ENCODE measurements at regions of chr11 and their contacts with region 1.

Region 1: DNA sequence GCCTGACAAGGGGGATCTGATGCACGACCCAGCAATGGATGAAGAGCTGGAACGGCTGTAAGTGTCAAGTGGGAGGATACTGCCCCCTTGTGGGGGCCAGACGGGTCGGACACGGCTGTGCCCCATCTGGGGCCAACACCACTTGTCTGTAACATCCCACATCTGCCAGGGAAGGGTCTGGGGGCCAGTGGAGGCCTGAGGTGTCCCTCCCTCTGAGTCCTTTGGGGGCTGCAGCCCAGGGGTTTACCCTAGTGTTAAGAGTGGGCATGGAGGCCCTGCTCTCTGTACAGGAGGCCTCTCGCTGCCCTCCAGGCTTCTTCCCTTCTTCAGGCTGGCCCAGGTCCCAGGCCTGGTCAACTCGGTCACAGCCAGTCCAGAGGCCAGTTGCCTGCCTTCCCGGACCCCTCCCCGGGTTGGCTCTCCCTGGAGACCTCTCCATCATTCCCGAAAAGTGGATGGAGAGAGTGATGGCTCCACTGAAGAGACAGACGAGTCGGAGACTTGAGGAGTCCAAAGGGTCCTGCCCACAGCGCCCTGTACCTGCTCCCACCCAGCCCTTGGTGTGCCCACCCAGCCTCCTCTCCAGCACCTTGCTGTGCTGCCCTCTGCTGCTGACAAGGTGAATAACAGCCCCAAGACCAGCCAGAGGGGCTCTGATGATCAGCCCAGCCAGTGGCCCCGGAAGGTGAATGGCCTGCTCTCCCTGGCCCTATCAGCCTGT is 15.4 kb downstream of the ARFGAP2 start:
- DNase-seq: peak; percentile 47
- ATAC-seq: peak; percentile 84
- H3K4me3 Mint-ChIP-seq: no peak overlapping the region
- H3K27ac Mint-ChIP-seq: no peak overlapping the region
- H3K4me1 Mint-ChIP-seq: no peaks in the 10 kb centered on the region
- H3K27me3 Mint-ChIP-seq: no peaks in the 10 kb centered on the region
- CTCF ChIP-seq: peak; percentile 46

Region 2: DNA sequence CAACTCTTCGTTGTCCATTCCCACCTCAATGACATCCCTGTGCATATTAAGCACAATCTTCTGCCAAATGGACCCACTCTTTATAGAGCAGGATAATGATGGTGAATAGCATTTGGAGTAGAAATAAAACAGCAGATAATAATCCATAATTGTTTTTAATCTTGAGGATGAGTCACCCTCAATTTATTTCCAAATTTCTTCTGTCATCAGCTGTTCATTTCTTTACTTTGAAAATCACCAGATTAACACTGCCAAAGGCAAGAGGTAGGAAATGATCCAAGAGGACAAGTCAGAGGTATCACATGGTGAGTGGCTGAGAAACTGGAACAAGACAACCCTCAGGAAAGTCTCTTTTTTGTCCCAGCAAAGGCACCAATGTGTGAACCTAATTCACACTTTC is 560.2 kb before region 1 on chr11:
- CTCF ChIA-PET with region 1: no interaction called
- POLR2A ChIA-PET with region 1: no interaction called
- intact Hi-C with region 1: no loop called
- DNase-seq: no peak
- ATAC-seq: no peak
- H3K4me3 Mint-ChIP-seq: no peak overlapping the region
- H3K27ac Mint-ChIP-seq: no peak overlapping the region
- H3K4me1 Mint-ChIP-seq: peaks cover 11% of the 10 kb centered on the region
- H3K27me3 Mint-ChIP-seq: no peaks in the 10 kb centered on the region
- CTCF ChIP-seq: no peak

Region 3: GRCh38 chr11:47233989-47234668 is 72.8 kb after region 1 on chr11:
- CTCF ChIA-PET with region 1: no interaction called
- POLR2A ChIA-PET with region 1: no interaction called
- intact Hi-C with region 1: no loop called
- DNase-seq: no peak
- ATAC-seq: no peak
- H3K4me3 Mint-ChIP-seq: no peak overlapping the region
- H3K27ac Mint-ChIP-seq: no peak overlapping the region
- H3K4me1 Mint-ChIP-seq: peaks cover 2% of the 10 kb centered on the region
- H3K27me3 Mint-ChIP-seq: no peaks in the 10 kb centered on the region
- CTCF ChIP-seq: no peak

Region 4: GRCh38 chr11:47259178-47259977 is 98.1 kb after region 1 on chr11:
- CTCF ChIA-PET with region 1: interaction called, 10 read pairs
- POLR2A ChIA-PET with region 1: interaction called, 5 read pairs
- intact Hi-C with region 1: no loop called
- DNase-seq: no peak
- ATAC-seq: peak; percentile 87
- H3K4me3 Mint-ChIP-seq: no peak overlapping the region
- H3K27ac Mint-ChIP-seq: no peak overlapping the region
- H3K4me1 Mint-ChIP-seq: peaks cover 2% of the 10 kb centered on the region
- H3K27me3 Mint-ChIP-seq: no peaks in the 10 kb centered on the region
- CTCF ChIP-seq: no peak

Region 5: DNA sequence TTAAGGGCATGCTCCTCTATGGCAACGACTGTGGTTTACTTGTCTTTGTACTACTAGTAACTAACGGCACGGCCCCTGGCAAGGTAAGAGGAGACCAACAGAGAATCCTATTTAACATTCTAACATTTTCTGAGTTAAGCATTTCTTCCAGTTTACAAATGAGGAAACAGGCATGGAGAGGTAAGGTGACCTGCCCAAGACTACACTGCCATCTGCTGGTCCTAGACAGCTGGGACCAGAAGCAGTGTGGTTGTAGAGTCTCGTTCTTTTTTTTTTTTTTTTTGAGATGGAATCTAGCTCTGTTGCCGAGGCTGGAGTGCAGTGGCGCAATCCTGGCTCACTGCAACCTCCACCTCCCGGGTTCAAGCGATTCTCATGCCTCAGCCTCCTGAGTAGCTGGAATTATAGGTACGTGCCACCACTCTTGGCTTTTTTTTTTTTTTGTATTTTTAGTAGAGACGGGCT is 292.9 kb after region 1 on chr11:
- CTCF ChIA-PET with region 1: no interaction called
- POLR2A ChIA-PET with region 1: no interaction called
- intact Hi-C with region 1: loop called (anchors 1 kb)
- DNase-seq: peak; percentile 24
- ATAC-seq: peak; percentile 96
- H3K4me3 Mint-ChIP-seq: no peak overlapping the region
- H3K27ac Mint-ChIP-seq: no peak overlapping the region
- H3K4me1 Mint-ChIP-seq: peaks cover 5% of the 10 kb centered on the region
- H3K27me3 Mint-ChIP-seq: no peaks in the 10 kb centered on the region
- CTCF ChIP-seq: no peak